Heart right ventricle (tissue), 16 donors: ENCODE measurements at regions of chr1 and their contacts with region 1.

Region 1: DNA sequence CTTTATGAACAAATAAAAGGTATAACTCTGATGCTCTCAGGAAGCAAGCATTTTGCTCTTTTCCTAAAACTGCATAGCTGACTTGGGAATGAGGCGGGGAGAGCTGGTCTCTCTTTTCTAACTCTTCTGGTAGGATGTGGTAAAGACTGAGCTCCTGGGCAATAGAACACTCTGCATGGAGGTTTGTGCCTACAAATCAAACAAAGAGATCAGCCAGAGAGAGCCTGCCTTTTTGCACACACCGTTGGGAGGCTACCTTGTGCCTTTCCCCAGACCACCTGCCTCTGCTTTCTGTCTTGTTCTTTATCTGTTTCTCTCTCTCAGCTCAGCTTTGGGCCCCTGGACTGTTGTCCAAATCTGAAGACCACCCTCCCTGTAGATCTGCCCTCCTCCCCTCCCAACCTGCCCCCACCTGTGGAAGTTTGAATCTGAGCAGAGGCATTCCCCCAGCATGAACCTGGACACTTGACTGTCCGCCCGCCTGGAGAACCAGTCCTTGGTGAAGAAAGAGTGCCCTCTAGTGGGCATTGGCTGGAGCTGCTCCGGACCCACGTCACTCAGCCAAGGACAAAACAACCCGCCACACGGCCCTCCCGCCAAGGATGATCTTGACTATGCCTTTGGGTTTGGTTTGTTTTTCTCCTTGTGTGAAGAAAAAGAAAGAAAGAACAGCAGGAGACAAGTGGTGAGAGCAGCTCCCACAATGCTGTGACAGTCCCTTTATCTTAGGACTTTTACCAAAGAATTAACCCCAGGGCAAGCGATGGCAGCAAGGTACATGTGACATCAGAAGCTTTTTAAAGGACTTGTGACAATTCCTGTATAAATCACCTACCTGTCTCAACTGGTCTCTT is 228.2 kb downstream of the PBX1 start:
- DNase-seq: peak; percentile 78 to 84
- ATAC-seq: peak; percentile 84 to 92 (median 88)
- H3K4me3 ChIP-seq: peak overlapping the region in 1 of 10 donors; percentile 13
- H3K27ac ChIP-seq: peak overlapping the region in 7 of 10 donors; percentile 2 to 78 (median 55)
- H3K4me1 ChIP-seq: peaks cover 18 to 70% (median 55%) of the 10 kb centered on the region in 9 donors
- H3K27me3 ChIP-seq: no peaks in the 10 kb centered on the region
- CTCF ChIP-seq: peak; percentile 90 to 96 (median 91)

Region 2: DNA sequence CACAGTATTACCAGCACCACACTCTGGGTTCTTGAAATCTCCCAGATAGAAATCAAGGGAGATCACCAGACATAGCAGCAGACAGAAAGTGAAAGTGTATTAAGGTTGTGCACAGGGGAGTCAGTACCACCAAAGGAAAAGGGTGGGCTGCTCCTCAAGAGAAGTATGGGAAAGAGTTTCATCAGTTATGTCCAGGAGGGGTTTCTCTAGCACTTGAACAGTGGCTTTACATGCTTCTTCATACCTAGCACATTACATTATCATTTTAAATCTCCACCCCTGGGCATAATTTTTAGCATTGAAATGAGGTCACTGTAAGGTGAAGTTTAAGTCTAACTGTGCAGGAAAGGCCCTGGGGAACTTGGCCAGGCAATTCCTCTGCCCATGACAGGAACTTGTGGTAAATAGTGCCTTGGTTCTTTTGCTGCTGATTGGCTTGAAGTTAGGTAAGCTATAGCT is 864.4 kb before region 1 on chr1:
- intact Hi-C with region 1: loop called in 1 of 10 experiments (anchors 10 kb)
- DNase-seq: no peak
- ATAC-seq: no peak
- H3K4me3 ChIP-seq: no peak overlapping the region
- H3K27ac ChIP-seq: no peak overlapping the region
- H3K4me1 ChIP-seq: peaks cover 0 to 5% (median 0%) of the 10 kb centered on the region in 9 donors
- H3K27me3 ChIP-seq: no peaks in the 10 kb centered on the region
- CTCF ChIP-seq: no peak

Region 3: DNA sequence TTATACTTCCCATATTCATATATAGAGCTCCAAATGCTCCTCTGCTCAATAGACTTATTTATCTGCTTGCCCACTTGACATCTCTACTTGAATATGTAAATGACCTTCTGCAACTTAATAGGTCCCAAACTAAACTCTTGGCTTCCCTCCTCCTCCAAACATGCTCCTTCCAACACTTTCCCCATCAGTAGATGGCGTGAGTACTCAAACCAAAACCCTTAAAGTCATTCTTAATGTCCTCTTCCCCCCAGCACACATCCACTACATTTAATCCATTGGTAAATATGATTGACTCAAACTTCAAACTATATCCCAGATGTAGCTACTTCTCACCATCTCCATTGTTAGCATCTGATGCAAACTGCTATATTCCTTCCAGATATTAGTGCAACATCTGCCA is 276.8 kb before region 1 on chr1:
- intact Hi-C with region 1: loop called in 1 of 10 experiments (anchors 5 kb)
- DNase-seq: no peak
- ATAC-seq: no peak
- H3K4me3 ChIP-seq: no peak overlapping the region
- H3K27ac ChIP-seq: no peak overlapping the region
- H3K4me1 ChIP-seq: peaks cover 0 to 6% (median 1%) of the 10 kb centered on the region in 9 donors
- H3K27me3 ChIP-seq: no peaks in the 10 kb centered on the region
- CTCF ChIP-seq: peak in 4 of 9 donors; percentile 7 to 48 (median 17)

Region 4: DNA sequence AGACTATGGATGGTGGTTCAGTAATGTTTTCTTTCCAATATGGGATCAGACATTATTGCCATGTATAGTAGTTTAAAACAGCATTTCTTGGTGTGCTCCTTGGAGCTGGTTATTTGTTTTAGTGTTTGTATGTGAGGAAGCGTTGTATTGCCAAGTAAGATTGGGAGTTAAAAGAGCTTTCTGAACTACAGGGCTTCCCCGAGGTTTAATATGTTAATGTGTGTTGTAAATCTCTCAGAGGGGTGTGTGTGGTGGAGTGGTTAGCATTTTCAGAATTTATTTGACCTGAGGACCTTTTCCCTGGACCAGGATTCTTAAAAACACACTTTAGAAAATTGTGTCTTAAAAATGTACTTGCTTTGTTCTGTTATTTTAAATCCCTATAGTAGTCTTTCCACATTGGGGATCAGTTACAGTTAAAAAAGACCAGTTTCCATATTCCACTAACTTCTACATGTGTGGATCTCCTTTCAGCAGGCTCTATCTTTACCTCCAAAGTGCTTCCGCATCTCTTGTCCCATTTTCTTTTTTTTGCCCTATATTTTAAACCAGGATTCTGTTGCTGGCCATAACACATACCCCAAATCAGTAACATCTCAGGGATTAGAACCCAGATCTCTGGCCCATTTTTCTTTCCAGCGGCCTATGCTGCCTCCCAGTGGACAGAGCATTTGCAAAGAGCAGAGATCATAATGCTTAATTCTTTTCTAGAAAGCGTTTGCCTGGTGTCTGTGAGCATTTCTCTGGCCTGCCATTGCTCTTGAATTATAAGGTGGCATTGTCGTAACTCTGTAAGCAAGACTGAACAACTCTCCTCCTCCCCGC is 169.6 kb before region 1 on chr1:
- intact Hi-C with region 1: loop called in 6 of 10 experiments (anchors 5 to 10 kb)
- DNase-seq: no peak
- ATAC-seq: no peak
- H3K4me3 ChIP-seq: no peak overlapping the region
- H3K27ac ChIP-seq: peak overlapping the region in 3 of 10 donors; percentile 11 to 32 (median 11)
- H3K4me1 ChIP-seq: peaks cover under 1 to 99% (median 61%) of the 10 kb centered on the region in 9 donors
- H3K27me3 ChIP-seq: no peaks in the 10 kb centered on the region
- CTCF ChIP-seq: peak in 8 of 9 donors; percentile 13 to 60 (median 48)

Region 5: DNA sequence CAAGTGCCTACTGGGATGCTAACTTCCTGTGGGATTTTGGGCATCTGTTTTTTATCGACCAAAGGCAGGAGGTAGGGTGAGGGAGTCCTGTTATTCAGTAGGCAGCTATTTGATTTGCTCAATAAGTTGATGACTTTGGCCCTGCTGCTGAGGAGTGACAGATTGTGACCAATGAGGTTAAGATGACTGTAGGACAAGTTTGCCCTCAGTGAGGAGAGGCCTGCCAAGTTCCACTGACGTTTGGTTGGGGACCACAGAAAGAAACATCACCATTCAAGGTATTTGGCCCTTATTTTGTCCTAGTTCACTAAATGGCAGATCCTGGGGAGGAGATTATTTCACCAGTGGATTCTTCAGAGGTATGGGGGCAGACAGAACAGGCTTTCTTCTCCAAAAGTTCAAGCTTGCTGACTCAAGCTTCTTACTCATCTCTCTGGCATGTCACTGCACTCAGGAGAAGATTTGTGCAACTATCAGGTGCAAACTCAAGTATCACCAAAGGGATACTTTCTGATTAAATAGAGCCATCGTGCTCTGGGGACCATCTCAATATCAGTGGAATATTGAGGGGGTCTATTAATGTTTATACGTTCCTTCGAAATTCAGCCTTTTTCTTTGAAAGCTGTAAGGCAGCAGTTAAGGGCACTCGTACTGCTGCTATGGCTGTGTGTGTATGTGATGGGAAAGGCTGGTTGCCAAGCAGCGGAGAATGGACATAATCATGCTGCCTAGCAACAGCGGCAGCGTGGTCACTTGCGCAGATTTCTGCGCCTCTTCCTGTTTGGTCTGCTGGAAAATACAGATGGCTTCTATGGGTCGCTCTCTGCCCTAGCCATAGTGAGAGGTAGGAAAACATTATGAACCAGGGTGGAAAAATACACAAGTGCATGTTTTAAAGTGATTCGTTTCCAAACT is 149.5 kb before region 1 on chr1:
- intact Hi-C with region 1: loop called in 1 of 10 experiments (anchors 10 kb)
- DNase-seq: peak; percentile 47 to 68
- ATAC-seq: peak; percentile 45 to 86 (median 73)
- H3K4me3 ChIP-seq: peak overlapping the region in 1 of 10 donors; percentile 3
- H3K27ac ChIP-seq: peak overlapping the region; percentile 21 to 87 (median 78)
- H3K4me1 ChIP-seq: peaks cover 17 to 90% (median 65%) of the 10 kb centered on the region in 9 donors
- H3K27me3 ChIP-seq: no peaks in the 10 kb centered on the region
- CTCF ChIP-seq: no peak

Region 6: DNA sequence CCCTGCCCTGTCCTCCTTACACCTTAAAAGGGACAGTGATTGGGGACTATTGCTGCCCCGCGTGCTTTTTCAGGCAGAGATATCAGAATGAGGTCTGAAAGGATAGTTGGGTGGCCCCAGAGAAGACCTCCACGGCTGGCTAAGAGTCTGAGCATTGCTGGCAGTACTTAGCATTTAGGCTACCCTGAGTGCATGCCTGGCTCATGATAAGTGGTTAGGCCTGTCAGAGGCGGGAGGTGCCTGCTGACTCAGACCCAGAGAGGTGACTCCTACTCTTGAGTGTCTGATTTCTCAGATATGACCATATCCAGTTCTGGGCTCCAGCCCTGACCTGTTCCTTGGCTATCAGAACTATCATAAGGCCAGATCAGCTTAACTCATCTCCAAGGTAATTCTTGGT is 14.6 kb before region 1 on chr1:
- intact Hi-C with region 1: no loop called
- DNase-seq: peak; percentile 45 to 55
- ATAC-seq: peak; percentile 66 to 94 (median 86)
- H3K4me3 ChIP-seq: no peak overlapping the region
- H3K27ac ChIP-seq: peak overlapping the region in 9 of 10 donors; percentile 1 to 73 (median 57)
- H3K4me1 ChIP-seq: peaks cover 9 to 77% (median 48%) of the 10 kb centered on the region in 9 donors
- H3K27me3 ChIP-seq: no peaks in the 10 kb centered on the region
- CTCF ChIP-seq: no peak

Region 7: DNA sequence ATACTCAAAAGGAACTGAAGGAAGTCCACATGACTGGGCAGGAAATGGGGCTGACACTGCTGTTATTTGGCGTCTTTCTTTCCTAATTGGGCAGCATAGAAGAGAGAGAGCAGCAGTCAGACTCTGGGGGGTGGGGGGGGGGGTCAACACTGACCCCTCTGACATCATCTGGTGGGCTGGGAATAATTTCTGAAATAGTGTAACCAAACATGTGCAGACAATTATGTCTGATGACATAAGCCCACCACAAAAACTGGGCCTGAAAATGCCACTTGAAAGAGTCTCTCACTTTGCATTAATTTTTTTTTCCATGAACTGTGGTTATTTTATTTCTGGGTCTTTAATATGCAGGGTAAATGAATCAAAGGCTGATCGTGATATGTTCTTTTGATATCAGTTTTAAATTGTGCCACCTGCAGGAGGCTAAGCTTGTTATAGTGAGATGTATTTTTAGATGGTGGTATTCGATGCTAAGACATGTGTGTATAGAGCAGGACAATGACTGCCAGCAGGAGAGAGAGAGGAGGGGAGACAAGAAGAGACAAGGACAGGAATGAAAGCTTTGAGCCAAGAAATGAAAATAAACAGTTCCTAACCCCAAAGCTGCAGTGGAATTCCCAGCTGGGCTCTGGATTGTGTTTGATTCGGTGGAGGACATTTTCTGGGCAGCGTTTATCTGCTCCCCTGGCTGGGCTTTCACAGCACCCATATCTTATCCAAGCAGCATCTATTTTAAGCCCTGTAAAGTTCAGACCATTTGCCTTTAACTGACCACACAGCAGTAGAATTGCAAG is 36.5 kb after region 1 on chr1:
- intact Hi-C with region 1: loop called in 1 of 10 experiments (anchors 5 kb)
- DNase-seq: peak in 1 of 2 donors; percentile 38
- ATAC-seq: peak; percentile 53 to 95 (median 88)
- H3K4me3 ChIP-seq: no peak overlapping the region
- H3K27ac ChIP-seq: peak overlapping the region in 9 of 10 donors; percentile 32 to 84 (median 70)
- H3K4me1 ChIP-seq: peaks cover 0 to 31% (median 16%) of the 10 kb centered on the region in 9 donors
- H3K27me3 ChIP-seq: no peaks in the 10 kb centered on the region
- CTCF ChIP-seq: peak in 3 of 9 donors; percentile 24 to 27 (median 27)

Region 8: DNA sequence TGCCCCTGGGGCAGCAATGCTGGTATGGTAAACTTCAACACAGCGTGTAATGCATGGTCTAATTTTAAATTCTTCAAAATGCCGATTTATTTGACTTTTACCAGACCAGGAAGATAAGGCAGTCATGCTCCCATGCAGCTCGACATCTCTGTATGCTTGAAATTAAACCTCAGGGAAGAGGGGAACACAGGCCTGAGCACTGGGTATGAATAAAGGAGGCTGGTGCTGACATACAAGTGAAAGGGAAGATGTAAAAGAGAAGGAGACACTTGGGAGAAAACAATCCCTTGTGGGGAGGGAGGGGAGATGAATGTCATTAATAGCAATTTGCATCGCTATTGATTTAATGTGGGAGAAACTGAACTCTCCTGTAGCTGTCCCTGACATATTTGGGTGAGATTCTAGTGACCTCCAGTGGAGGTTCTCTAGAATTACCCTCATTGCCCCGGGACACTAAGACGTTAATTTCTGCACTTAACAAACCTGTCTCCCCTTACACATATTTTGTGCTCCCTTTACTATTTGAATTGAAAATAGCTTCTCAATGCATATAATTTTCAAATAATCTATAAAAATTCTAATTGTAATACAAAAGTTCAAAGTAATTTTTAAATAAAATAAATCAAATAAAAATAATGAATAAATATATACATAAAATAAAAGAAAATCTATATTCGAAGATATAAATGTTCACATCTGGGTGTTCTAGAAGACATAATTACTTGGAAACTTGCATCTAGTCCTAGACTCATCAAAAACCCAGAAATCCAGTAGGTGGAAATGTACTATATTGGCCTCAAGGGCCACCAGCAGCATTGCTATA is 286.2 kb after region 1 on chr1:
- intact Hi-C with region 1: loop called in 4 of 10 experiments (anchors 5 to 10 kb)
- DNase-seq: no peak
- ATAC-seq: peak; percentile 55 to 76 (median 68)
- H3K4me3 ChIP-seq: no peak overlapping the region
- H3K27ac ChIP-seq: no peak overlapping the region
- H3K4me1 ChIP-seq: peaks cover 0 to 12% (median 0%) of the 10 kb centered on the region in 9 donors
- H3K27me3 ChIP-seq: no peaks in the 10 kb centered on the region
- CTCF ChIP-seq: peak; percentile 64 to 84 (median 79)